CD8-positive, alpha-beta memory T cell (primary cell): ENCODE measurements at regions of chr7 and their contacts with region 1.

Region 1: GRCh38 chr7:87876040-87876868 is at the starts of genes DBF4 and SLC25A40:
- DNase-seq: peak; percentile 92 to 96 (median 95)
- H3K4me3 ChIP-seq: peak within 1 kb of the TSS; percentile 87
- H3K4me3 Mint-ChIP-seq: peak within 1 kb of the TSS; percentile 92 to 100 (median 97)
- H3K27ac ChIP-seq: peak within 1 kb of the TSS; percentile 97
- H3K27ac Mint-ChIP-seq: peak within 1 kb of the TSS; percentile 97 to 99 (median 98)
- H3K4me1 ChIP-seq: peaks cover 35% of the 10 kb centered on the region
- H3K4me1 Mint-ChIP-seq: peaks cover 56 to 70% (median 64%) of the 10 kb centered on the region in 3 donors
- H3K27me3 ChIP-seq: no peaks in the 10 kb centered on the region
- H3K27me3 Mint-ChIP-seq: peaks cover 0 to 2% of the 10 kb centered on the region in 2 donors
- total RNA-seq, gene DBF4: 63.9 to 67.1 TPM
- total RNA-seq, gene SLC25A40: 32.8 to 37.9 TPM

Region 2: DNA sequence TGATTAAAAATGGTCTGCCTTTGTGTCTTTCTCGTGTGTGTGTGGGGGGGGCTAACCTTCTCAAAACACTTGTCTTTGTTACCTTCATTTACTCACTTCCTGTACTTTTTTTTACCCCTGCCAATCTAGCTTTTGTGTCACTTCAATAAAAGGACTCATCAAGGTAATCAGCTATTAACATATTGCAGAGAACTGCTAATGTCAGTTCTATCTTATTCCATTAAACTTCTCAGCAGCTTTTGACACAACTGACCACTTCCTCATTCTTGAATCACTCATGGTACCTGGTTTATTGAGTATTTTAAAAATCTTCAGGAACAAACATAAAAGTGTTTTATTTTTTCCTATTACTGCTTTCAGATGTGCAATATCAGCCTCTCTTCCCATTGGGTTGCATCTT is 59.9 kb before region 1 on chr7:
- CTCF ChIA-PET with region 1: no interaction called
- POLR2A ChIA-PET with region 1: no interaction called
- DNase-seq: no peak
- H3K4me3 ChIP-seq: no peak overlapping the region
- H3K4me3 Mint-ChIP-seq: no peak overlapping the region
- H3K27ac ChIP-seq: no peak overlapping the region
- H3K27ac Mint-ChIP-seq: no peak overlapping the region
- H3K4me1 ChIP-seq: no peaks in the 10 kb centered on the region
- H3K4me1 Mint-ChIP-seq: peaks cover 0 to 6% (median 2%) of the 10 kb centered on the region in 3 donors
- H3K27me3 ChIP-seq: no peaks in the 10 kb centered on the region
- H3K27me3 Mint-ChIP-seq: peaks cover 6 to 7% of the 10 kb centered on the region in 2 donors

Region 3: DNA sequence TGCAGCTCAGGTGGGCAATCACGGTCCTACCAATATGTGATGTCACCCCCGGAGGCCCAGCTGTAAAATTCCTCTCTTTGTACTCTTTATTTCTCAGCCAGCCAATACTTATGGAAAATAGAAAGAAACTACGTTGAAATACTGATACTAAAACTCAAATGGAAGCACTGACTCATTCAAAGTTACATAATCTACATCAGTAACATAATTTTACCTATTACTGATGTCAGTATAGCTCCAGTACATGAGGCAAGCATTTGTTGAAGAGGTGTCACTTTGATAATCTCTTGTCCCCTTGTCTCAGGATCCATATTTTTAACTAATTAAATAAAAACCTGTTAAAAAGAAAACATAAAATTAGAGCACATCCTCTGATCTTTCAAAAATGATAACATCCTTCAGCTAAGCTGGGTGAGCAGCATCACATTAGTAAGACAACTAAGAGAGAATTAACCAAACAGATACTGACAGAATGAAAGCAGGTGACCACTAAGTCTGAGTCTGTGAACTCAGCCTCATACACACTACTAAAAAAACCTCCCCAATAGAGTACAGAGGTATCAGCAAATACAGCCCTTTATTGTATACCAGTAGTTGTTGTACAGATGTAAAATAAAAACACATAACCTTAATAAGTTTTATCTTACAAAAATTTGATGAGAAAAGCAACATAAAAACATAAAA is 17.7 kb before region 1 on chr7:
- CTCF ChIA-PET with region 1: no interaction called
- POLR2A ChIA-PET with region 1: no interaction called
- DNase-seq: no peak
- H3K4me3 ChIP-seq: no peak overlapping the region
- H3K4me3 Mint-ChIP-seq: no peak overlapping the region
- H3K27ac ChIP-seq: no peak overlapping the region
- H3K27ac Mint-ChIP-seq: peak overlapping the region in 2 of 8 donors; percentile 30 to 94
- H3K4me1 ChIP-seq: no peaks in the 10 kb centered on the region
- H3K4me1 Mint-ChIP-seq: peaks cover 14 to 18% (median 17%) of the 10 kb centered on the region in 3 donors
- H3K27me3 ChIP-seq: no peaks in the 10 kb centered on the region
- H3K27me3 Mint-ChIP-seq: no peaks in the 10 kb centered on the region

Region 4: GRCh38 chr7:87933945-87934698 is 57.9 kb after region 1 on chr7 and contains the start of gene ADAM22:
- CTCF ChIA-PET with region 1: interaction called, 3 read pairs
- POLR2A ChIA-PET with region 1: interaction called, 14 read pairs
- DNase-seq: peak; percentile 75 to 92 (median 83)
- H3K4me3 ChIP-seq: peak within 1 kb of the TSS; percentile 69
- H3K4me3 Mint-ChIP-seq: peak within 1 kb of the TSS; percentile 88 to 95 (median 93)
- H3K27ac ChIP-seq: peak within 1 kb of the TSS; percentile 38
- H3K27ac Mint-ChIP-seq: peak within 1 kb of the TSS; percentile 61 to 89 (median 79)
- H3K4me1 ChIP-seq: peaks cover 6% of the 10 kb centered on the region
- H3K4me1 Mint-ChIP-seq: peaks cover 9 to 22% (median 13%) of the 10 kb centered on the region in 3 donors
- H3K27me3 ChIP-seq: no peaks in the 10 kb centered on the region
- H3K27me3 Mint-ChIP-seq: peaks cover 0 to 3% of the 10 kb centered on the region in 2 donors
- total RNA-seq, gene ADAM22: 4.3 to 4.7 TPM